Naive thymus-derived CD4-positive, alpha-beta T cell (primary cell): ENCODE measurements at regions of chr11 and their contacts with region 1.

Region 1: DNA sequence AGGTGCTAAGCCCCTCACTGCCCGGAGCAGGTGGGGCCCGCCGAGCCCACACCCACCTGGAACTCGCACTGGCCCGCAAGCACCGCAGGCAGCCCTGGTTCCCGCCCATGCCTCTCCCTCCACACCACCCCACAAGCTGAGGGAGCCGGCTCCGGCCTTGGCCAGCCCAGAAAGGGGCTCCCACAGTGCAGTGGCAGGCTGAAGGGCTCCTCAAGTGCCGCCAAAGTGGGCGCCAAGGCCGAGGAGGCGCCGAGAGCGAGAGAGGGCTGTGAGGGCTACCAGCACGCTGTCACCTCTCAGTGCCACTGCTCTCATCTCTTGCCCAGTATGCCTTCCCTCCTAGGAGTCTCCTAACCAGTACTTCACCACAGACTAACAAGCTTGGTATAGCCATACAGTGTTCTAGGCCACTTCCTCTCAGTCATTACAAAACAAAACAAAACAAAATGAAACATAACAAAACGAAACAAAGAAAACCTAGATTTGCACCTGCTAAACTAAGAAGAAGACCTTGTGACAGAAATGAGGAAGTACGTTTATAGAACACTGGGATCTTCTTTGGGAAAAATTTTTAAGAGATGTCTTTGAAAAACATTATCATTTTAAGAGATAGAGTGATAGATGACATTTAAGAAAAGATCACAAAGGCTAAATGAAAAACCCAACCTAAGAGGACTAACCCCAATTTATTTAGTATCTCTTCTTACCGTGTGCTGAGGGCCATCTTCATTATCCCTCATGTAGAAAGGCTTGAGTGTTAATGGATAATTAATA is 47.7 kb upstream of the GAB2 start:
- DNase-seq: peak in 6 of 9 donors; percentile 16 to 55 (median 26)
- ATAC-seq: peak; percentile 93
- H3K4me3 ChIP-seq: no peak overlapping the region
- H3K4me3 Mint-ChIP-seq: peak overlapping the region; percentile 37 to 81 (median 64)
- H3K27ac ChIP-seq: peak overlapping the region; percentile 3
- H3K27ac Mint-ChIP-seq: peak overlapping the region; percentile 54 to 95 (median 79)
- H3K4me1 ChIP-seq: peaks cover 4 to 5% of the 10 kb centered on the region in 2 donors
- H3K4me1 Mint-ChIP-seq: peaks cover 12 to 44% (median 17%) of the 10 kb centered on the region in 7 donors
- H3K27me3 ChIP-seq: no peaks in the 10 kb centered on the region
- H3K27me3 Mint-ChIP-seq: no peaks in the 10 kb centered on the region

Region 2: DNA sequence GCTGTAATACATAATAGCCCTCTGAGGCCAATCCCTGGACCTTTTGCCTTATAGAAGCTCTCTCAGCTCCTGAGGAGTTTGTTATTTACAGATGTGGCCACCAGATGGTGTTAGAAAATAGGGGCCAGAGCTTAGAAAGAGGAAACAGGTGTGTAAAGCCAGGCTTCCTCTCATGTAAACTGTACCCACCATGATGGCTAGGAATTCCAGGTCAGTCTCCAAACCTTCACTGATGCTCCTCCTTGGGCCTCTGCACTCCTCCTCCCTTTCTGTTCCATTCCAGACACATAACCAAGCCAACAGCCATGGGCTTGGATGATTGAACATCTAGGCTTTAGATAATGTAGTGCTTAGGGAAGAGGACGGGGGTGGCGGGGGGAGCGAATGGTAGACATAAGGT is 236.9 kb before region 1 on chr11:
- CTCF ChIA-PET with region 1: no interaction called
- POLR2A ChIA-PET with region 1: no interaction called
- intact Hi-C with region 1: loop called in 1 of 2 experiments (anchors 2 kb)
- DNase-seq: peak in 2 of 9 donors; percentile 18 to 21
- ATAC-seq: peak; percentile 76
- H3K4me3 ChIP-seq: no peak overlapping the region
- H3K4me3 Mint-ChIP-seq: no peak overlapping the region
- H3K27ac ChIP-seq: no peak overlapping the region
- H3K27ac Mint-ChIP-seq: peak overlapping the region in 2 of 9 donors; percentile 57 to 65
- H3K4me1 ChIP-seq: no peaks in the 10 kb centered on the region
- H3K4me1 Mint-ChIP-seq: peaks cover 6 to 61% (median 9%) of the 10 kb centered on the region in 7 donors
- H3K27me3 ChIP-seq: no peaks in the 10 kb centered on the region
- H3K27me3 Mint-ChIP-seq: no peaks in the 10 kb centered on the region

Region 3: GRCh38 chr11:78449866-78450265 is 15.5 kb before region 1 on chr11:
- CTCF ChIA-PET with region 1: no interaction called
- POLR2A ChIA-PET with region 1: no interaction called
- intact Hi-C with region 1: loop called in 1 of 2 experiments (anchors 2 kb)
- DNase-seq: no peak
- ATAC-seq: no peak
- H3K4me3 ChIP-seq: no peak overlapping the region
- H3K4me3 Mint-ChIP-seq: no peak overlapping the region
- H3K27ac ChIP-seq: no peak overlapping the region
- H3K27ac Mint-ChIP-seq: no peak overlapping the region
- H3K4me1 ChIP-seq: no peaks in the 10 kb centered on the region
- H3K4me1 Mint-ChIP-seq: peaks cover 0 to 26% (median 5%) of the 10 kb centered on the region in 7 donors
- H3K27me3 ChIP-seq: no peaks in the 10 kb centered on the region
- H3K27me3 Mint-ChIP-seq: no peaks in the 10 kb centered on the region

Region 4: DNA sequence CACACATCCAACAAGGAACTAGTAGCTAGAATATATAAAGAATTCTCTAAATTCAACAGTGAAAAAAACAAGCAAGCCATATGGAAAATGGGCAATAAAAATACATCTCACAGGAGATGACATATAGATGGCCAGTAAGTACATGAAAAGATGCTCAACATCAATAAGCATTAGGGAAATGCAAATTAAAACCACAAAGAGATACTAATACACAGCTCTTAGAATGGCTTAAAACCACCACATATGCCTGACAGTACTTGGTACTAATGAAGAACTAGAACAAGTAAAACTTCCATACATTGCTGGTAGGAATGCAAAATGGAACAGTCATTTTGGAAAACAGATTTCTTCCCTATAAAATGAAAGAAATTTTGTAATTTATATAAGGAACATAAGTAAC is 23.8 kb after region 1 on chr11:
- CTCF ChIA-PET with region 1: no interaction called
- POLR2A ChIA-PET with region 1: no interaction called
- intact Hi-C with region 1: no loop called
- DNase-seq: no peak
- ATAC-seq: no peak
- H3K4me3 ChIP-seq: no peak overlapping the region
- H3K4me3 Mint-ChIP-seq: no peak overlapping the region
- H3K27ac ChIP-seq: no peak overlapping the region
- H3K27ac Mint-ChIP-seq: no peak overlapping the region
- H3K4me1 ChIP-seq: no peaks in the 10 kb centered on the region
- H3K4me1 Mint-ChIP-seq: peaks cover 0 to 3% (median 0%) of the 10 kb centered on the region in 7 donors
- H3K27me3 ChIP-seq: no peaks in the 10 kb centered on the region
- H3K27me3 Mint-ChIP-seq: no peaks in the 10 kb centered on the region